ENCODE measurements at regions of chr7 and their contacts with region 1.

Region 1: GRCh38 chr7:47945261-47946001 is 2.8 kb downstream of the PKD1L1 start:
- DNase-seq: peak; percentile 62 to 71
- ATAC-seq: peak; percentile 70 to 82; a peak in 5 of 6 replicates
- H3K4me3 ChIP-seq: no peak overlapping the region
- H3K27ac ChIP-seq: no peak overlapping the region
- H3K4me1 ChIP-seq: peaks cover 13% of the 10 kb centered on the region
- CTCF ChIP-seq: peak; percentile 91
- EP300 ChIP-seq: no peak
- POLR2A ChIP-seq: no peak
- RAD21 ChIP-seq: peak; percentile 86 to 88

Region 2: DNA sequence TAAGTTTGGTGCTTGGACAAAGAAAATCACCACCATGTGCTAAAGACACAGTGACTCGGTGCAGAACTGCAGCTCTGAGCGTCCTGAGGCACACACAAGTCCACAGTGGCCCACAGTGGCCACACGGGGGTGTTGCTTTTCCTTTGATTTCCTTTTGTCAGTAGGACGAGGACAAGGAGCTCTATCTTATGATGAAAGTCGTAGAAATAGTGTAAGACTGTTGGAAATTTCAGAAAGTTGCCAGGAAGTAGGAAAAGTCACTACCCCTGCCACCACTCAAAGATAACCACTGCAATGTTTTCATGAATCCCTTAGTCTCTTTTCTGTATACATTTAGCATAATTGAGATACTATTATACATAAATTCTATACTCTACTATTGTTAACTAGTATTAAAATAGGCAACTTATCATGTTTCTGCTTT is 509.5 kb before region 1 on chr7:
- CTCF ChIA-PET with region 1: interaction called, 13 read pairs
- POLR2A ChIA-PET with region 1: no interaction called
- DNase-seq: peak; percentile 62 to 79
- ATAC-seq: peak; percentile 84 to 94
- H3K4me3 ChIP-seq: no peak overlapping the region
- H3K27ac ChIP-seq: peak overlapping the region; percentile 61 to 74
- H3K4me1 ChIP-seq: peaks cover 45% of the 10 kb centered on the region
- CTCF ChIP-seq: peak; percentile 62
- EP300 ChIP-seq: no peak
- POLR2A ChIP-seq: no peak
- RAD21 ChIP-seq: peak; percentile 66 to 71

Region 3: DNA sequence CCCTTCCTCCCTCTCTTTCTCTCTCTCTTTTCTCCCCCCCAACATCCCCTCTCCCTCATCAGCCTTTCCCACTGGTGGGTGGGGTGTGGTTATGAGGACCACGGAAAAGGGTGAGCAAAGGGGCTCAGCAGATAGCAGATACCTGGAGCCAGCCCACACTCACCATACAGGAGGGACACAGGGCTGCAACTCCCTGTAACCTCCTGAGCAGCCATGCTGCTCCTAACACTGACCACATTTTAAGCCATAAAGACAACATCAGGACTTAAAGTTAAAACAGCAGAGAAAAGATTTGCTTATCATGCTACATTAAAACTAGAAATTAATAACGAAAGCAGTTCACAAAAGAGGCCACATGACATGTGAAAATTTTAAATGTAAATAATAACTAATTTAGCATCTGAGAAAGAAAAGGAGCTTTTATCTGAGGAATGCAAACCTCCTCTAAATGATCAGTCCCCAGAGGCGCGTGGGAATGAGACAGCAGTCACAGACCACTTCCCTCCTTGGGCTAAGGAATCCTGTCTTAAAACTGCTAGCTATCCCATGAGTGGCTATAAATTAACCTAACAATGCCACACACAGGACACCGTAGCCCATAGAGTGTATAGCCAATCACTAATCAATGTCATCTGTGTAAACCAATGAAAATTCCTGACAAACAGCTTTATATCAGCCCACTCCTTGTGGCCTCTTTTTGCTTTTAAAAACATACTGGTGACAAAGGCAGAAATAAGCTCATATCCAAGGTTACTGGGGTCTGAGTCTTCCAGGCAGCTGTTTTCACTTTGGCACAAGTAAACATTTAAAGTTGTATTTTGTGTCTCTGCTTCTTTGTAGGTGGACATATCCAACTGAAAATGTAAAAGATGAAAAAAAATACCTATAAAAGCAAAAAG is 30.5 kb before region 1 on chr7:
- CTCF ChIA-PET with region 1: interaction called, 10 read pairs
- POLR2A ChIA-PET with region 1: no interaction called
- DNase-seq: no peak
- ATAC-seq: no peak
- H3K4me3 ChIP-seq: no peak overlapping the region
- H3K27ac ChIP-seq: no peak overlapping the region
- H3K4me1 ChIP-seq: no peaks in the 10 kb centered on the region
- CTCF ChIP-seq: no peak
- EP300 ChIP-seq: no peak
- POLR2A ChIP-seq: no peak
- RAD21 ChIP-seq: no peak

Region 4: DNA sequence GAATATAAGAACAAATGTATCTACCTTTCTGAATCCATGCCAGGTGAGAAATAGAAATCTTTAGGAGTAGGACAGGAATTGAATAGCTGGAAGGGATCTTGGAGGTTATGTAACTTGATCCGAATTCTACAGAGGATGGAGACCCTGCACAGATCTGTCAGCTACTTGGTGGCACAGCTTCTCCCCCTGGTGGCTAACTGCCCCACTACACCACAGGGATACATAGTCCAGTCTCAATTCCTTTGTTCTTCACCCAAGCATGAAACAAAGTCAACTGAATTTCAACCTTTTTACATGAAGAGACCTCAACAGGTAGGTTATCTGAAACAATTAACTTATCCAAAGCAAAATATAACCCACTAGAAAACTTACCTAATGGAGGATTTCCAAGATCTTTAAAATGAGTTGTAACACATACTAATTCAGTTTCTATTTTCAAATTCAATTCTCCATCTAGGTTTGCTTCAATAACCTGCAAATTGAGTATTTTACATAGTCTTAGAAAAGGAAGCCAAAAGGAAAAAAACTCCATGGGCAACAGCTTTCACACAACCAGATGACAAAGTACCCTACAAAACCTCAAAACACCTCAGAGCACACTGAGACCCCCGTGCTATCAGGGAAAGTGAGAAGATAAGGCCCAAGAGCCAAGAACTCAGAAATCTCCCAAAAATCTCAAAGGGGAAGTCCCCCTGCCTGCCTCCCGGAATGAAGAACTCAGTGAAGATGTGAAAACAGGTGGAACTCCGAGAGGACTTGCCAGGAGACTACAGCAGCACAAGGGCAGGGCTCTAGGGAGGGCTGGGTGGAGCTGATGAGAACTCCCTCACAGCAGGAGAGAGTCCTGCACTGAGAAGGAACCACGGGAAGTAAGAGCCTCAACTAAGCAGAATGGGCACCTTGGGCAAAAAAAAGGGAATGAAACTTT is 23.7 kb after region 1 on chr7:
- CTCF ChIA-PET with region 1: interaction called, 42 read pairs
- POLR2A ChIA-PET with region 1: no interaction called
- DNase-seq: peak; percentile 75 to 82
- ATAC-seq: peak; percentile 81 to 96
- H3K4me3 ChIP-seq: no peak overlapping the region
- H3K27ac ChIP-seq: no peak overlapping the region
- H3K4me1 ChIP-seq: no peaks in the 10 kb centered on the region
- CTCF ChIP-seq: peak; percentile 79
- EP300 ChIP-seq: no peak
- POLR2A ChIP-seq: no peak
- RAD21 ChIP-seq: peak; percentile 73 to 83

Region 5: GRCh38 chr7:48041653-48041970 is 96.2 kb after region 1 on chr7:
- CTCF ChIA-PET with region 1: no interaction called
- POLR2A ChIA-PET with region 1: no interaction called
- DNase-seq: no peak
- ATAC-seq: no peak
- H3K4me3 ChIP-seq: no peak overlapping the region
- H3K27ac ChIP-seq: no peak overlapping the region
- H3K4me1 ChIP-seq: no peaks in the 10 kb centered on the region
- CTCF ChIP-seq: no peak
- EP300 ChIP-seq: no peak
- POLR2A ChIP-seq: no peak
- RAD21 ChIP-seq: no peak

Region 6: GRCh38 chr7:48101968-48102367 is 156.5 kb after region 1 on chr7:
- CTCF ChIA-PET with region 1: interaction called, 63 read pairs
- POLR2A ChIA-PET with region 1: no interaction called
- DNase-seq: no peak
- ATAC-seq: peak in 1 of 2 experiments; percentile 46; a peak in 2 of 6 replicates
- H3K4me3 ChIP-seq: no peak overlapping the region
- H3K27ac ChIP-seq: no peak overlapping the region
- H3K4me1 ChIP-seq: no peaks in the 10 kb centered on the region
- CTCF ChIP-seq: peak; percentile 23
- EP300 ChIP-seq: no peak
- POLR2A ChIP-seq: no peak
- RAD21 ChIP-seq: no peak

Region 7: GRCh38 chr7:48154792-48155413 is 209.5 kb after region 1 on chr7:
- CTCF ChIA-PET with region 1: interaction called, 46 read pairs
- POLR2A ChIA-PET with region 1: no interaction called
- DNase-seq: peak; percentile 48 to 66
- ATAC-seq: peak; percentile 90 to 97
- H3K4me3 ChIP-seq: no peak overlapping the region
- H3K27ac ChIP-seq: no peak overlapping the region
- H3K4me1 ChIP-seq: peaks cover 4% of the 10 kb centered on the region; the same call in 1 of the 3 replicates
- CTCF ChIP-seq: peak; percentile 79
- EP300 ChIP-seq: no peak
- POLR2A ChIP-seq: no peak
- RAD21 ChIP-seq: peak; percentile 87 to 94

Measured in A549 (cell line).